GM12878 (cell line): ENCODE measurements at regions of chr5 and their contacts with region 1.

Region 1: DNA sequence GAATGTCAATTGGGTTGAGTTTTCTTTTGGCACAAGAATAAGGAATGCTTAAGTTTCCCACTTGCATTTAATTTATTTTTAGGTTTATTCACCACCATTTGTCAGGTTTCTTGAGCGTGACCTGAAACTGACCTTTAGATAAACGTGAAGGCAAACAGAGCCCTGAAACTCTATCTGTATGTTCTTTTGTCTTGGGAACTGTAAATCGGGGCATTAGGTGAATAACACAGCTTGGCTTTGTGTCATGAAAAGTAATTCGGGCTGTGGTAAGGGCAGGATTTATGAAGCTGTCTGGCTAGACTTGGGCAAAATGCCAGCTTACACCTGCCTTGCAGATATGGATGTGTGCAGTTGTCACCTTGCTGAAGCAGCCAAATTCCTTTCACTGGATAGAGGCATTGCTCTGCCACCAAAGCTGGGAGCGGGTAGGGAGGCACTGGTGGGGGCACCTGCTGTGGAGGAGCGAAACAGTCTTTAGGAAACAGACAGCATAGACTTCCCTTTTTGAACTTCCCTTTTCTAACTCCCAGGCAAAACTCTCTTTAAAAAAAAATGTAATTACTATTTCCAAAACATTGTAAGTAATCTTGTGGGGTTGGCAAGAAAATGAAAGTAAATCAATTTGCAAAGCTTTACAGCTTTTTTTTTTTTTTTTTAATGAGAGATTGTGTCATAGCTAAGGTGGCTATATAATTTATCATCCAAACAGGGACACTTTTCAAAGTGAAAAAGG is 545.2 kb downstream of the CSNK1G3 start:
- DNase-seq: peak; percentile 47
- ATAC-seq: peak; percentile 76
- H3K4me3 ChIP-seq: peak overlapping the region; percentile 65; the same call in 1 of the 2 replicates
- H3K27ac ChIP-seq: peak overlapping the region; percentile 46
- H3K4me1 ChIP-seq: peaks cover 37% of the 10 kb centered on the region
- H3K27me3 ChIP-seq: no peaks in the 10 kb centered on the region
- CTCF ChIP-seq: no peak
- EP300 ChIP-seq: 0 out of 4 replicates have a peak, but pooled peaks of 1 of the 2 experiments have one; percentile 5
- POLR2A ChIP-seq: no peak
- RAD21 ChIP-seq: no peak

Region 2: DNA sequence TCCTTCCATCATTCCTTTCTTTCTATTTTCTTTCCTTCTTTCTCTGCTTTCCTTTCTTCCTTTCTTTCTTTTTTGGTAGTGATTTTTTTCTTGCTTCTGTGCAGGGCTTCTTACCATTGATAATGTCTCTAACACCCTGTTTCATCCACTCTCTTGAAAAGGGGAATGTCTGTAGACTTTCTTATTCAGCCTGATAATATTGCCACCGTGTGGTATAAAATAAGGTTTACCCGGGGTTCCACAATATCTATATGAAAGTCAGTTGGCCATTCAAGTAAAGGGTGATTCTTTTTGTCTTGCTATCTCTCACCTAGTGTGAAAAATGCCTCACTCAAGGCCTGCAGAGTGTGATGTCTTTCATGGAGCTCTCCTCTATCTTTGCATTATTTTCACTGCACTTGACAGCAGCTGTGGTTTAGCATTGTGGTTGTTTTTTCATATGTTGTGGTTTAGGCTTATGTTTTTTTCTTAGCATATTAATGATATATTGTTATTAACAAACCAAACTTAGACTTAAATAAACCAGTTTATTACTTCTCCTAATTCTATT is 391.3 kb before region 1 on chr5:
- CTCF ChIA-PET with region 1: no interaction called
- POLR2A ChIA-PET with region 1: no interaction called
- RAD21 ChIA-PET with region 1: no interaction called
- SMC1A ChIA-PET with region 1: no interaction called
- in situ Hi-C with region 1: no loop called
- intact Hi-C with region 1: loop called (anchors 10 kb)
- DNase-seq: no peak
- ATAC-seq: peak; percentile 21; the same call in 1 of the 3 replicates
- H3K4me3 ChIP-seq: no peak overlapping the region
- H3K27ac ChIP-seq: no peak overlapping the region
- H3K4me1 ChIP-seq: no peaks in the 10 kb centered on the region
- H3K27me3 ChIP-seq: no peaks in the 10 kb centered on the region; a peak in 1 of 4 replicates
- CTCF ChIP-seq: no peak
- EP300 ChIP-seq: no peak
- POLR2A ChIP-seq: no peak
- RAD21 ChIP-seq: 0 out of 2 replicates have a peak, but pooled peaks have one; percentile 21

Region 3: DNA sequence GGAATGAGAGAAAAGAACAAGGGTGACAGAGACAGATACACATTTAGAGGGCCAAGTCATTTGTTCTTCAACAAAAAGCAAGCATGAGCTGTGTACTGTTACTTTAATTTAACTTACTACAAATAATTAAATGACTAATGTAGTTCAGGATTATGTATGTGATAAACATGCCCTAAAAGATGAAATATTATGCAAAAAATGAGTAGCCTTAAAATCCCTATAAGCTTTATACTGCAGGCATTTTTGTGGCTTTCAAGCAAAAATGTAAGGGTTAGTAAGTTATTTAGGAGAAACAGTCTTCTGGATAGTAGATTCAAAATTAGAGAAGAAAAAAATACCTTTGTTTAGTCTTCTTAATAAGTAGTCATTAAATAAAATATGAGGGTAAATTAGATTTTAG is 114.0 kb before region 1 on chr5:
- CTCF ChIA-PET with region 1: no interaction called
- POLR2A ChIA-PET with region 1: no interaction called
- RAD21 ChIA-PET with region 1: no interaction called
- SMC1A ChIA-PET with region 1: no interaction called
- in situ Hi-C with region 1: no loop called
- intact Hi-C with region 1: no loop called
- DNase-seq: no peak
- ATAC-seq: no peak
- H3K4me3 ChIP-seq: no peak overlapping the region
- H3K27ac ChIP-seq: no peak overlapping the region
- H3K4me1 ChIP-seq: no peaks in the 10 kb centered on the region
- H3K27me3 ChIP-seq: no peaks in the 10 kb centered on the region
- CTCF ChIP-seq: no peak
- EP300 ChIP-seq: no peak
- POLR2A ChIP-seq: no peak
- RAD21 ChIP-seq: no peak

Region 4: GRCh38 chr5:124034963-124035362 is 22.2 kb before region 1 on chr5:
- CTCF ChIA-PET with region 1: interaction called, 4 read pairs
- POLR2A ChIA-PET with region 1: interaction called, 4 read pairs
- RAD21 ChIA-PET with region 1: interaction called, 14 read pairs
- SMC1A ChIA-PET with region 1: interaction called, 34 read pairs
- in situ Hi-C with region 1: no loop called
- intact Hi-C with region 1: no loop called
- DNase-seq: peak; percentile 84
- ATAC-seq: peak; percentile 98
- H3K4me3 ChIP-seq: no peak overlapping the region
- H3K27ac ChIP-seq: peak overlapping the region; percentile 53; the same call in 1 of the 2 replicates
- H3K4me1 ChIP-seq: peaks cover 22% of the 10 kb centered on the region
- H3K27me3 ChIP-seq: no peaks in the 10 kb centered on the region
- CTCF ChIP-seq: no peak
- EP300 ChIP-seq: peak; percentile 97 to 99
- POLR2A ChIP-seq: no peak
- RAD21 ChIP-seq: 0 out of 2 replicates have a peak, but pooled peaks have one; percentile 9

Region 5: DNA sequence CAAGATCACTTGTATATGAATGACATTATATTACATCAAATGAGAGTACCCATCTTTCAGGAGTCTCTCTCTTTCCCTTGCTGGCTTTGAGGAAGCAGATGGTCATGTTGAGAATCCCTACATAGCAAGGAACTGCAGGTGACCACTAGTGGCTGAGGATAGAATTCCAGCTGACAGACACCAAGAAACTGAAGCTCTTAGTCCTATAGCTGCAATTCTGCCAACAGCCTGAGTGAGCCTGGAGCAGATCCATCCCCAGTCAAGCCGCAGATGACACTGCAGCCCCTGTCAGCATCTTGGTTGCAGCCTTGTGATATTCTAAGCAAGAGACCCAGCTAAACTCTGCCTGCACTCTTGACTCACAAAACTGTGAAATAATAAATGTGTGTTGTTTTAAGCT is 13.7 kb before region 1 on chr5:
- CTCF ChIA-PET with region 1: interaction called, 9 read pairs
- POLR2A ChIA-PET with region 1: no interaction called
- RAD21 ChIA-PET with region 1: interaction called, 4 read pairs
- SMC1A ChIA-PET with region 1: interaction called, 13 read pairs
- in situ Hi-C with region 1: no loop called
- intact Hi-C with region 1: no loop called
- DNase-seq: no peak
- ATAC-seq: peak; percentile 41; the same call in 1 of the 3 replicates
- H3K4me3 ChIP-seq: no peak overlapping the region
- H3K27ac ChIP-seq: no peak overlapping the region
- H3K4me1 ChIP-seq: no peaks in the 10 kb centered on the region
- H3K27me3 ChIP-seq: no peaks in the 10 kb centered on the region
- CTCF ChIP-seq: no peak
- EP300 ChIP-seq: no peak
- POLR2A ChIP-seq: no peak
- RAD21 ChIP-seq: no peak